Thyroid gland (tissue), 4 donors: ENCODE measurements at regions of chr7 and their contacts with region 1.

Region 1: DNA sequence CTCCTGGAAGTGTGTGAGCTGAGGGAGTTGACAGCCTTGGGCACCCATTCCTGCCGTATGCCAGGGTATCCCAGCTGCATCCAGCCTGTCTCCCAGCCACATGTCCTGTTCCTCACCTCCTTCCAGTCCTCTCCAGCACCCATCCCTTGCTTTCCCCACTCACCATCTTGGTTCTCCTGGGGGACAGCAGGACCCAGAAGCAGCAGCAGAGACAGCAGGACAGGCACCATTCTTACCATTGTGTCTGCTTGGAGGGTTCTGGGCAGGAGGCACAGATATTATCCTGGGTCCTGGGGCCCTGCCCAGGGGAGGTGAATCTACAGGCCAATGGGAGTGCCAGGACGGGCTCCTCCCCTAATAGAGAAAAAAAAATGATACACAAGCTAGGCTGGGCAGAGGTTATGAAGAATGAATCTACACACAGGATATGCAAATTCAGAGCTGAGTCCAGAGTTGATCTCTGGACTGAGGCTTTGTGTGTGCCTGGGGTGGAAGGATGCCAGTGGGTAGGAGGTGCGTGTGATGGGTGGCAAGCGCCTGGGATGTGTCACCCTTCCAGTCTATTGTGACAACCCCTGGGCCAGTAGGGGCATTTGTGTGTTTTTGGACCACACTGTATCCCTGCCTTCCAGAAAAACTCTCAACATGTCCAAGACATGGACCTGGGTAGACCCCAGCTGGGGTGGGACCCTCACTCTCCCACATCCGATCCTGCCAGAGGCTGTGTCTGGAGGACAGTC is at the start of gene AZGP1:
- DNase-seq: no peak
- H3K4me3 ChIP-seq: no peak within 1 kb of the TSS
- H3K27ac ChIP-seq: no peak within 1 kb of the TSS
- H3K4me1 ChIP-seq: no peaks in the 10 kb centered on the region
- H3K27me3 ChIP-seq: no peaks in the 10 kb centered on the region
- CTCF ChIP-seq: no peak
- POLR2A ChIP-seq: no peak
- total RNA-seq, gene AZGP1: 1.6 to 3.5 (median 3.1) TPM in 3 of 4 donors, not detected in the other

Region 2: GRCh38 chr7:99920149-99920548 is 55.8 kb before region 1 on chr7:
- intact Hi-C with region 1: loop called (anchors 5 kb)
- DNase-seq: no peak
- H3K4me3 ChIP-seq: peak overlapping the region in 2 of 3 donors; percentile 82 to 89
- H3K27ac ChIP-seq: peak overlapping the region in 1 of 3 donors; percentile 64
- H3K4me1 ChIP-seq: peaks cover 24 to 32% of the 10 kb centered on the region in 2 donors
- H3K27me3 ChIP-seq: no peaks in the 10 kb centered on the region
- CTCF ChIP-seq: no peak
- POLR2A ChIP-seq: no peak

Region 3: GRCh38 chr7:100132697-100133151 is 156.8 kb after region 1 on chr7:
- intact Hi-C with region 1: loop called (anchors 5 kb)
- DNase-seq: peak; percentile 41 to 42
- H3K4me3 ChIP-seq: no peak overlapping the region
- H3K27ac ChIP-seq: no peak overlapping the region
- H3K4me1 ChIP-seq: peaks cover 0 to 11% of the 10 kb centered on the region in 2 donors
- H3K27me3 ChIP-seq: no peaks in the 10 kb centered on the region
- CTCF ChIP-seq: peak in 5 of 6 experiments; percentile 26 to 72 (median 45)
- POLR2A ChIP-seq: no peak